ENCODE measurements at regions of chr12 and their contacts with region 1.

Region 1: GRCh38 chr12:10771132-10771733 is 31.2 kb downstream of the TAS2R7 start:
- DNase-seq: no peak
- H3K4me3 ChIP-seq: no peak overlapping the region
- H3K27ac ChIP-seq: no peak overlapping the region
- H3K4me1 ChIP-seq: no peaks in the 10 kb centered on the region
- H3K27me3 ChIP-seq: no peaks in the 10 kb centered on the region
- CTCF ChIP-seq: peak in 2 of 3 experiments; percentile 52 to 63
- POLR2A ChIP-seq: no peak

Region 2: DNA sequence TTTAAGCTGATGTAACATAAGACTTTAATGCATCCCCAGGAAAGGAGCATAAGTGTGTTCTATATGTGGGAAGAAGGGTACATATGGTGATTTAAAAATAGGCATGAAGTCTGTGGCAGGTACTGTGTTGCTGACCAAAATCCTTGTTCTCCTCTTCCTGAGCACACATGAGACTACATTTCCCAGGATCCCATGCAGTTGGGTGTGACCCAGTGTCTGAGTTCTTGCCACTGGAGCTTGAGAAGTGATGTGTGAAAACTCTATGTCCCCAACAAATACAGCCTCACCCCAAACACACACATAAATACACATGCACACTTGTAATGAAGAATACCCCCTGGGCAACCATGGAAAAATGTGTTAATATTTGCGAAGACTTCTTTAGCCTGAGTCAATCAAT is 391.3 kb after region 1 on chr12:
- intact Hi-C with region 1: no loop called
- DNase-seq: no peak
- H3K4me3 ChIP-seq: no peak overlapping the region
- H3K27ac ChIP-seq: no peak overlapping the region
- H3K4me1 ChIP-seq: no peaks in the 10 kb centered on the region
- H3K27me3 ChIP-seq: no peaks in the 10 kb centered on the region
- CTCF ChIP-seq: no peak
- POLR2A ChIP-seq: no peak

Region 3: DNA sequence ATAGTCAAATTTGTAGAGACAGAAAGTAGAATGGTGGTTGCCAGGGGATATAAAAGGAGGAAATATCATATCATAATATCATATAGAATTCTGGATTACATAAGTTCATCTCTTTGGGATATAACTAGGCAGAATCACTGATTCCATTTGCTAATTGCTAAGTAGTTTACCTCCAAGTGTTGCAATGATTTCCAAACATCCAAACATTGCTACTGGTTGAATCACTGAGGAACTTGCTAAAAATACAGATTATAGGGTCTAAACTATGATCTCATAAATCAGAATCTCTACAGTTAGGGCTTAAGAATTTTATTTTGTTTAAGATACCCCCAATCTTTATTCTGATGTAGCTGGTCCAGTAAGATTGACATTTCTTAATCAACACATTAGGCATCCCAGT is 431.6 kb after region 1 on chr12:
- intact Hi-C with region 1: loop called (anchors 5 kb)
- DNase-seq: no peak
- H3K4me3 ChIP-seq: no peak overlapping the region
- H3K27ac ChIP-seq: no peak overlapping the region
- H3K4me1 ChIP-seq: no peaks in the 10 kb centered on the region
- H3K27me3 ChIP-seq: no peaks in the 10 kb centered on the region
- CTCF ChIP-seq: no peak
- POLR2A ChIP-seq: no peak